Activated T-helper 1 cell treated with anti-CD3 and anti-CD28 coated beads, Interleukin-12 subunit alpha, Interleukin-12 subunit beta, Interleukin-2, Interleukin-4 antibody, amounts not matched to agents 30 ng/mL and 10 ng/mL and 1 ng/mL, durations not matched to agents 14 hours and 24 hours and 36 hours (primary cell): ENCODE measurements at regions of chr3 and their contacts with region 1.

Region 1: DNA sequence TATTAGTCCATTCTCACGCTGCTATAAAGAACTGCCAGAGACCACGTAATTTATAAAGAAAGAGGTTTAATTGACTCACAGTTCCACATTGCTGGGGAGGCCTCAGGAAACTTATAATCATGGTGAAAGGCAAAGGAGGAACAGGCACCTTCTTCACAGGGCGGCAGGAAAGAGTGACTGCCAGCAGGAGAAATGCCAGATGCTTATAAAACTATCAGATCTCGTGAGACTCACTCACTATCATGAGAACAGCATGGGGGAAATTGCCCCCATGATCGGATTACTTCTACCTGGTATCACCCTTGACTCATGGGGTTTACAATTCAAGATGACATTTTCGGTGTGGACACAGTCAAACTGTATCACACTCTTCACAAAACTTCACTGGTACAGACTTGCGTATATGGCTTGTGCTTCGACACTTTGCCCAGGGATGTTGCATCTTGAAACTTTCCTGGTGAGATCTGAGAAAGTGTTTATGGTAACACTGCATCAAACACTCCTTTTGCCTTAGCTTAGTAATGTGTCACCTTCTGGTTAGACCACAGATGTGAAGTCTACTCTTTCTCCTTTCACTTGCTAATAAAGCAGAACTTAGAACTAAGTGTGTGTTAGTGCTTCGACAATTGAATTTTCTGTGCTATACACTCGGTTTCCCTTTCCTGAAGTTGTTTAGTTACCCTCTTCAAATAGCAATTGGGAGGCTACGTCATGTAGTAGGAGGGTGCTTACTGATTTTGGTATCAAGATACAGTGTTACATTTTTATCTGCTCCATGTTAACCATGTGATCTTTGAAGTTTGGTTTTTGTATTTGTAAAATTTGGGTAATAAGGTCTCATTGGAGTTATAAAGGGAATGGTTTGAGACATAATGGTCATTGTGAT is 185.7 kb downstream of the LPP start:
- DNase-seq: peak; percentile 39
- H3K4me3 Mint-ChIP-seq: peak overlapping the region; percentile 63
- H3K27ac Mint-ChIP-seq: peak overlapping the region; percentile 86
- H3K4me1 Mint-ChIP-seq: peaks cover 37% of the 10 kb centered on the region
- H3K27me3 Mint-ChIP-seq: peaks cover 24% of the 10 kb centered on the region

Region 2: DNA sequence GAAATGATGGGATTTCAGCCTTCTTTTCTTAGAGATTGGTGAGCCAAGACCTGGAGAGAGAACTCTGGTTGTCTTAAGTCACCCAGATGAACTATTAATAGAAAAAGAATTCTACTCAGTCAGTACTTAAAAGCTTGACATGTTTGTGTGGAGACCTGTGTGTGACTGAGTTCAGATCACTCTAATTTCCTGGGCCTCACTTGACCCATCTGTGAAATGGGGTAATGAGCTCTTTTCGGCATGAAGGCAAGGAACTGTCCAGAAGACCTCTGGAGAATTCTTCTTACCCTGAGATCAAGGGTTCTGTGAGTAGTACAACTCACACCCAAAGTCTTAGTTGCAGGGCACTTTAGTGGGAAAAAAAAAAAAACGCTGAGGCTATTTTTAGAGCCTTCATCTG is 92.7 kb before region 1 on chr3:
- intact Hi-C with region 1: no loop called
- DNase-seq: no peak
- H3K4me3 Mint-ChIP-seq: no peak overlapping the region
- H3K27ac Mint-ChIP-seq: no peak overlapping the region
- H3K4me1 Mint-ChIP-seq: peaks cover 22% of the 10 kb centered on the region
- H3K27me3 Mint-ChIP-seq: no peaks in the 10 kb centered on the region

Region 3: GRCh38 chr3:188257384-188258026 is 82.1 kb before region 1 on chr3:
- intact Hi-C with region 1: loop called (anchors 1 kb)
- DNase-seq: no peak
- H3K4me3 Mint-ChIP-seq: no peak overlapping the region
- H3K27ac Mint-ChIP-seq: peak overlapping the region; percentile 63
- H3K4me1 Mint-ChIP-seq: peaks cover 62% of the 10 kb centered on the region
- H3K27me3 Mint-ChIP-seq: peaks cover 2% of the 10 kb centered on the region

Region 4: GRCh38 chr3:188309437-188310269 is 30.0 kb before region 1 on chr3:
- intact Hi-C with region 1: loop called (anchors 1 kb)
- DNase-seq: no peak
- H3K4me3 Mint-ChIP-seq: peak overlapping the region; percentile 40
- H3K27ac Mint-ChIP-seq: peak overlapping the region; percentile 64
- H3K4me1 Mint-ChIP-seq: peaks cover 35% of the 10 kb centered on the region
- H3K27me3 Mint-ChIP-seq: peaks cover 9% of the 10 kb centered on the region

Region 5: GRCh38 chr3:188389711-188390342 is 50.2 kb after region 1 on chr3:
- intact Hi-C with region 1: loop called (anchors 1 kb)
- DNase-seq: peak; percentile 33
- H3K4me3 Mint-ChIP-seq: peak overlapping the region; percentile 25
- H3K27ac Mint-ChIP-seq: peak overlapping the region; percentile 86
- H3K4me1 Mint-ChIP-seq: peaks cover 44% of the 10 kb centered on the region
- H3K27me3 Mint-ChIP-seq: peaks cover 1% of the 10 kb centered on the region

Region 6: GRCh38 chr3:188697127-188697526 is 357.5 kb after region 1 on chr3:
- intact Hi-C with region 1: loop called (anchors 1 kb)
- DNase-seq: no peak
- H3K4me3 Mint-ChIP-seq: no peak overlapping the region
- H3K27ac Mint-ChIP-seq: peak overlapping the region; percentile 18
- H3K4me1 Mint-ChIP-seq: peaks cover 36% of the 10 kb centered on the region
- H3K27me3 Mint-ChIP-seq: peaks cover 5% of the 10 kb centered on the region

Region 7: GRCh38 chr3:188941103-188941502 is 601.5 kb after region 1 on chr3:
- intact Hi-C with region 1: no loop called
- DNase-seq: no peak
- H3K4me3 Mint-ChIP-seq: no peak overlapping the region
- H3K27ac Mint-ChIP-seq: no peak overlapping the region
- H3K4me1 Mint-ChIP-seq: no peaks in the 10 kb centered on the region
- H3K27me3 Mint-ChIP-seq: peaks cover 3% of the 10 kb centered on the region

Region 8: DNA sequence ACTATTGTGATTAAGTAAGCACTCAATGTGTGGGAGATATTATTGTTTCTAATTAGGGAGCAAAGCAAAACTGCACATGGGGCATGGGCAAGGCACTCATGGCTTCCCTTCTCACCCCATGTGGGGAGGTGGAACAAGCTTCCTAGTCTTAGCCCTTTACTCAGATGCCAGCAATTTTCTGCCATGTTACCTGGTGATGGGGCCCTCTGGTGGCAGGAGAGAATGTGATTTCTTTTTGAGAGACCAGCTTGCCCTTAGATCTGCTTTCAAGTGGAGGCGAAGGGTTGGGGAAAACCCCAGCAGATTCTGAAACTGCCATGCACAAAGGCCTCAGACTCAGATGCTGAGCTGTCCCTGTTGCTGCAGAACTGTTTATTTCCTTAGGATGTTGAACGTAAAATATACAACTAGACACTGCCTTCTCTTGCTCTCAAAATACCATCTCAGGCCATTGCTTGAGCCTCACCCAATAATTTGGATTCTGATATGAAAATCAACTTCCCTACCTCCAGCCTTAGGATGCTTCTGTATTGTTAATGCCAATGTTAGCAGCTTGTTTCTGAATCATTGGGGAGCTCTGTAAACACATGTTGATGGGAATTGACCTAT is 701.9 kb after region 1 on chr3:
- intact Hi-C with region 1: loop called (anchors 1 kb)
- DNase-seq: peak; percentile 75
- H3K4me3 Mint-ChIP-seq: no peak overlapping the region
- H3K27ac Mint-ChIP-seq: no peak overlapping the region
- H3K4me1 Mint-ChIP-seq: peaks cover 56% of the 10 kb centered on the region
- H3K27me3 Mint-ChIP-seq: peaks cover 4% of the 10 kb centered on the region